ENCODE measurements at regions of chr1 and their contacts with region 1.

Region 1: DNA sequence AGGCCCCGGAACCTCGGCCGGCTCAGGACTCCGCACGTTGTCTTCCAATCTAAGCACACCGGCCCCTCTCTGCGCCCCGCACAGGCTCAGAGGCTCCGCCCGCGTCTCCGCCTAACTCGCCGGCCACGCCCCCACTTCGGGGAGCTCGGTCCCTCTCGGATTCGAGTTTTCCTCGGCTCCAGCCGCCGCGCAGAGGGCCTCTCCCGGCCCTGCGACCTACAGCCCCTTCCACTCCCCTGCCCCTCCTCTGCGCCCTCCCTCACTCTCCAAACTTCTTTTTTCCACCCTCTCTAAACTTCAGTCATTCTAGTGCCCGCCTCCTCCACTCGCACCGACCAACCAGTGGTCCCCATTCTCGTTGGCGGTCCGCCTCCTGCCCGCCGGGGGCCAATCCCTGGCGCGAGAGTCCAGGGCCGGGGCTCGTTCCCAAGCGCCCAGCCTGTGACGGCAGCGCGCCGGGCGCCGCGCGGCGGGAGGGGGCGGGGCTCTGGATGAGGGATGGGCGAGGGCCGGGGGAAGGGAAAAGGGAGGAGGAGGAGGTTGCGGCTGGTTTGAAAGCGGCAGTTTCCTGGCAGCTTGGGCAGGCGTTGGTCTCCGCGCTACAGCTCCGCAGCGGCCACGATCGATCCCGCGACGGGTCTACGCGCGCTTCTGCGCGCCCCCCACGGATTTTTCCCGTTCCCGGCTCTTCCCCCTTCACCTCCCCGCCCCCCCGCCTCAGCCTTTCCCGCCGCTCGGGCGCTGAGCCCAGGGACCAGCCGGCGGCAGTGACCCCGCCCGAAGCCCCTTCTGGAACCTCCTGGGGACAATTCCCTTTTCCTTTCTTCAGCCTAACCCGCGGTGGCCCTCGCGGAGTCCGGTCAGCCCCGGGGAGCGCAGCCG is at the start of gene MAGI3:
- DNase-seq: peak; percentile 97
- ATAC-seq: peak; percentile 97
- H3K4me3 Mint-ChIP-seq: peak within 1 kb of the TSS; percentile 86
- H3K27ac Mint-ChIP-seq: peak within 1 kb of the TSS; percentile 79
- H3K4me1 Mint-ChIP-seq: peaks cover 23% of the 10 kb centered on the region
- H3K27me3 Mint-ChIP-seq: peaks cover 5% of the 10 kb centered on the region
- total RNA-seq, gene MAGI3: 6.4 to 6.7 TPM

Region 2: GRCh38 chr1:113133038-113133437 is 257.2 kb before region 1 on chr1:
- CTCF ChIA-PET with region 1: interaction called, 3 read pairs
- POLR2A ChIA-PET with region 1: no interaction called
- intact Hi-C with region 1: loop called in 1 of 2 experiments (anchors 5 kb)
- DNase-seq: peak; percentile 56
- ATAC-seq: peak; percentile 84
- H3K4me3 Mint-ChIP-seq: no peak overlapping the region
- H3K27ac Mint-ChIP-seq: peak overlapping the region; percentile 38
- H3K4me1 Mint-ChIP-seq: peaks cover 60% of the 10 kb centered on the region
- H3K27me3 Mint-ChIP-seq: no peaks in the 10 kb centered on the region

Region 3: GRCh38 chr1:113415310-113416070 is 25.3 kb after region 1 on chr1:
- CTCF ChIA-PET with region 1: interaction called, 6 read pairs
- POLR2A ChIA-PET with region 1: no interaction called
- intact Hi-C with region 1: loop called in 1 of 2 experiments (anchors 2 kb)
- DNase-seq: no peak
- ATAC-seq: peak; percentile 58
- H3K4me3 Mint-ChIP-seq: no peak overlapping the region
- H3K27ac Mint-ChIP-seq: peak overlapping the region; percentile 1
- H3K4me1 Mint-ChIP-seq: no peaks in the 10 kb centered on the region
- H3K27me3 Mint-ChIP-seq: no peaks in the 10 kb centered on the region

Region 4: GRCh38 chr1:113811888-113812660 is 421.9 kb after region 1 on chr1 and contains the start of gene RSBN1:
- CTCF ChIA-PET with region 1: no interaction called
- POLR2A ChIA-PET with region 1: no interaction called
- intact Hi-C with region 1: loop called (anchors 2 to 5 kb)
- DNase-seq: peak; percentile 99
- ATAC-seq: peak; percentile 97
- H3K4me3 Mint-ChIP-seq: peak within 1 kb of the TSS; percentile 97
- H3K27ac Mint-ChIP-seq: peak within 1 kb of the TSS; percentile 97
- H3K4me1 Mint-ChIP-seq: peaks cover 33% of the 10 kb centered on the region
- H3K27me3 Mint-ChIP-seq: no peaks in the 10 kb centered on the region
- total RNA-seq, gene RSBN1: 22.1 to 24.3 TPM

Region 5: GRCh38 chr1:113949007-113949406 is 558.8 kb after region 1 on chr1:
- CTCF ChIA-PET with region 1: no interaction called
- POLR2A ChIA-PET with region 1: no interaction called
- intact Hi-C with region 1: loop called in 1 of 2 experiments (anchors 10 kb)
- DNase-seq: no peak
- ATAC-seq: no peak
- H3K4me3 Mint-ChIP-seq: no peak overlapping the region
- H3K27ac Mint-ChIP-seq: peak overlapping the region; percentile 79
- H3K4me1 Mint-ChIP-seq: peaks cover 76% of the 10 kb centered on the region
- H3K27me3 Mint-ChIP-seq: no peaks in the 10 kb centered on the region

Region 6: GRCh38 chr1:114164840-114165553 is 774.8 kb after region 1 on chr1:
- CTCF ChIA-PET with region 1: no interaction called
- POLR2A ChIA-PET with region 1: no interaction called
- intact Hi-C with region 1: no loop called
- DNase-seq: peak; percentile 57
- ATAC-seq: peak; percentile 93
- H3K4me3 Mint-ChIP-seq: no peak overlapping the region
- H3K27ac Mint-ChIP-seq: no peak overlapping the region
- H3K4me1 Mint-ChIP-seq: no peaks in the 10 kb centered on the region
- H3K27me3 Mint-ChIP-seq: peaks cover 15% of the 10 kb centered on the region